GM12878 (cell line): ENCODE measurements at regions of chr10 and their contacts with region 1.

Region 1: GRCh38 chr10:104127411-104127810 is 5.4 kb downstream of the SFR1 start:
- DNase-seq: no peak
- ATAC-seq: peak; percentile 88
- H3K4me3 ChIP-seq: no peak overlapping the region
- H3K27ac ChIP-seq: no peak overlapping the region
- H3K4me1 ChIP-seq: peaks cover 5% of the 10 kb centered on the region; the same call in 1 of the 2 replicates
- H3K27me3 ChIP-seq: no peaks in the 10 kb centered on the region
- CTCF ChIP-seq: peak; percentile 25 to 41 (median 37); a peak in 5 of 6 replicates
- EP300 ChIP-seq: no peak
- POLR2A ChIP-seq: no peak
- RAD21 ChIP-seq: no peak

Region 2: DNA sequence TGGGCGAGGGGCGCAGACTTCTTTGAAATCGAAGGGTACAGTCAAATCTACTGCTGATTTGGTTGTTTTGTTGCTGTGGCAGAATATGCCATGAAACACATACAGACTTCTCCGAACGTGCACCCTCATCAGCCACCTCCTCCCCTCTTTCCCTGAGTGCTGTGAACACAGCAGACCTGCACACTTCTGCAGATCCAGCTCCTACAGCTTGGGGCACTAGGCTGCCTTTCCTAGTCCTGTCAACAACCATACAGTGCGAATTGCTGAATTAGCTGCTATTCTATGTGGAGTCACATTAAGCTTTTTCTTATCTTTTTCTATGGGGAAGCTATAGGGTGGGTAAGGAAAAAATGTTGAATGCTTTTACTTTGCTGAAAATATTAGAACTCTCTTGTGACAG is 99.3 kb before region 1 on chr10:
- CTCF ChIA-PET with region 1: interaction called, 15 read pairs
- POLR2A ChIA-PET with region 1: no interaction called
- RAD21 ChIA-PET with region 1: interaction called, 7 read pairs
- SMC1A ChIA-PET with region 1: interaction called, 6 read pairs
- in situ Hi-C with region 1: no loop called
- intact Hi-C with region 1: loop called (anchors 5 kb)
- DNase-seq: no peak
- ATAC-seq: peak; percentile 66; the same call in 2 of the 3 replicates
- H3K4me3 ChIP-seq: no peak overlapping the region
- H3K27ac ChIP-seq: no peak overlapping the region
- H3K4me1 ChIP-seq: no peaks in the 10 kb centered on the region
- H3K27me3 ChIP-seq: no peaks in the 10 kb centered on the region
- CTCF ChIP-seq: peak in 2 of 3 experiments; percentile 9 to 29; a peak in 2 of 6 replicates
- EP300 ChIP-seq: no peak
- POLR2A ChIP-seq: no peak
- RAD21 ChIP-seq: peak; percentile 11; the same call in 1 of the 2 replicates

Region 3: DNA sequence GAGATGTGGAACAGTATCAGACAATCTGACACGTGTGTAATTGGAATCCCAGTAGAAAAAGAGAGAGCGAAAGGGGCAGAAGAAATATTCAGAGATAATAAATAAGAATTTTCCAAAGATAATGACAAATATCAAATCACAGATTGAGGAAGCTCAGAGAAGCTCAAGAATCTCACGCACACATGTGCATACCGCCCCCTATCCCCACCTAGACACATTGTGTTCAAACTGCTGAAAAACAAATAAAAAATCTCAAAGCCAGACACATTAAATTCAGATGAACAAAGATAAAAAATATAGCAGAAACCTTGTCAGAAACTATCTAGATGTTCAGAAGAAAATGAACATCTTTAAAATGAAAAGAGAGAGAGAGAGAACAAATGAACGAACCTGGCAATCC is 11.8 kb after region 1 on chr10:
- CTCF ChIA-PET with region 1: interaction called, 24 read pairs
- POLR2A ChIA-PET with region 1: interaction called, 4 read pairs
- RAD21 ChIA-PET with region 1: interaction called, 3 read pairs
- SMC1A ChIA-PET with region 1: interaction called, 15 read pairs
- in situ Hi-C with region 1: no loop called
- intact Hi-C with region 1: no loop called
- DNase-seq: no peak
- ATAC-seq: peak; percentile 42; the same call in 1 of the 3 replicates
- H3K4me3 ChIP-seq: no peak overlapping the region
- H3K27ac ChIP-seq: no peak overlapping the region
- H3K4me1 ChIP-seq: no peaks in the 10 kb centered on the region
- H3K27me3 ChIP-seq: no peaks in the 10 kb centered on the region; a peak in 2 of 4 replicates
- CTCF ChIP-seq: peak; percentile 47 to 55 (median 48); a peak in 5 of 6 replicates
- EP300 ChIP-seq: no peak
- POLR2A ChIP-seq: no peak
- RAD21 ChIP-seq: peak; percentile 44; the same call in 1 of the 2 replicates

Region 4: GRCh38 chr10:104387130-104387888 is 259.9 kb after region 1 on chr10:
- CTCF ChIA-PET with region 1: no interaction called
- POLR2A ChIA-PET with region 1: no interaction called
- RAD21 ChIA-PET with region 1: no interaction called
- SMC1A ChIA-PET with region 1: no interaction called
- in situ Hi-C with region 1: no loop called
- intact Hi-C with region 1: no loop called
- DNase-seq: no peak
- ATAC-seq: peak; percentile 73
- H3K4me3 ChIP-seq: no peak overlapping the region
- H3K27ac ChIP-seq: no peak overlapping the region
- H3K4me1 ChIP-seq: no peaks in the 10 kb centered on the region
- H3K27me3 ChIP-seq: peaks cover 1 to 3% of the 10 kb centered on the region in 2 experiments; a peak in 1 of 4 replicates
- CTCF ChIP-seq: no peak
- EP300 ChIP-seq: no peak
- POLR2A ChIP-seq: no peak
- RAD21 ChIP-seq: no peak